ENCODE measurements at regions of chr4 and their contacts with region 1.

Region 1: GRCh38 chr4:112247021-112247420 is 15.4 kb downstream of the AP1AR start:
- DNase-seq: no peak
- ATAC-seq: no peak
- H3K4me3 Mint-ChIP-seq: no peak overlapping the region
- H3K27ac Mint-ChIP-seq: no peak overlapping the region
- H3K4me1 Mint-ChIP-seq: no peaks in the 10 kb centered on the region
- H3K27me3 Mint-ChIP-seq: no peaks in the 10 kb centered on the region
- CTCF ChIP-seq: no peak

Region 2: DNA sequence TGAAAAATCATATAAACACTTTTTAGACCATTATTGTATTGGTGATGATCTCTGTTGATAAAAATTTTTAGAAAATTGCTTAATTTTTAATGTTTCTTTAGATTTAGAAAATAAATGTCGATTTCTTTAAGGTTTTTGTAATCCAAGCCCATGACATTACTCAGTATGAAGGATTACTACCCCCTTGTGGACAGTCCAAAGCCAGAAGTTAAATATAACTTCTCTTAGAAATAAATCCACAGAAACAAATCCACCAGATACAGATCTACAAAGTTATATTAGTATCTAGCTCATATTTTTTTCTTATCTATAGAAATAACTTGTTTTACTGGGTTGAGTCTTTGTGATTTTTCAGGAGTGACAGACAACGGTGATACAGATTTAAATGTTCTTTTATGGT is 19.8 kb after region 1 on chr4:
- CTCF ChIA-PET with region 1: interaction called, 3 read pairs
- POLR2A ChIA-PET with region 1: no interaction called
- intact Hi-C with region 1: loop called (anchors 2 kb)
- DNase-seq: no peak
- ATAC-seq: no peak
- H3K4me3 Mint-ChIP-seq: no peak overlapping the region
- H3K27ac Mint-ChIP-seq: no peak overlapping the region
- H3K4me1 Mint-ChIP-seq: peaks cover 2% of the 10 kb centered on the region
- H3K27me3 Mint-ChIP-seq: no peaks in the 10 kb centered on the region
- CTCF ChIP-seq: no peak

Measured in activated B cell treated with CpG ODN at 0.5 μM for 24 hours (primary cell).